H1 (cell line): ENCODE measurements at regions of chr9 and their contacts with region 1.

Region 1: DNA sequence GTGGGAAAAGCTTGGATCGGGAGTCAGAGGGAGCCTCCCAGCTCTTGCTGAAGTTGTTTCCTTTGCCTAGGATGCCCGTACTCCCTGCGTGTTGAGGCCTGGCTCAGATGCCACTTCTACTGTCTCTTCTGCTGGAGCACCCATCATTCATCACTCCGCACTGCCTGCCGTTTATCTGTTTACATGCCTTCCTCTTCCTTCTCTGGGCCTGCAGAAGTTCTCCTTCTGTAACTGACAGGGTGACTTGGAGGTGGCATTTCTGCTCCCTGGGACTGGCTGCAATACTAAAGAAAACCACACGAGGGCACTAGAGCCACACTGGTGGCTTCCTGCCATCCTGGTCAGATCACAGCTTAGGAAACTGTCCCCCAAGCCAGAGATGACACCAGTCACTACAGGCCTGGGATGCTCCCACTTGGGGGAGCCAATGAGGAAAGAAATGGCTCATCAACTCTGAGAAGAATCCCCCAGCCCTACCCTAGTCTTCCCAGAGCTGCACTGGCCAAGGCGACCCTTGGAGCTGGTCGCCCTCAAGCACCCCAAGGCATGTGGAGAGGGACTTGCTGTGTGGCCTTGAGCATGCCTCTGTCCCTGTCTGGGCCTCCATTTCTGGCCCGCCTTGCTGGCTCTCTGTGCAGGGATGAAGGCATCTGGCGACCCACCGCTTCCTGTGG is 9.7 kb upstream of the SLC25A51 start:
- DNase-seq: peak; percentile 82 to 99
- H3K4me3 ChIP-seq: no peak overlapping the region
- H3K27ac ChIP-seq: no peak overlapping the region
- H3K4me1 ChIP-seq: no peaks in the 10 kb centered on the region
- H3K27me3 ChIP-seq: no peaks in the 10 kb centered on the region
- CTCF ChIP-seq: peak; percentile 78 to 99 (median 98)
- EP300 ChIP-seq: no peak
- POLR2A ChIP-seq: no peak
- RAD21 ChIP-seq: peak; percentile 100

Region 2: GRCh38 chr9:37732086-37732741 is 181.4 kb before region 1 on chr9:
- CTCF ChIA-PET with region 1: no interaction called
- POLR2A ChIA-PET with region 1: no interaction called
- DNase-seq: no peak
- H3K4me3 ChIP-seq: no peak overlapping the region
- H3K27ac ChIP-seq: no peak overlapping the region
- H3K4me1 ChIP-seq: peaks cover 0 to 14% (median 3%) of the 10 kb centered on the region in 4 experiments; a peak in 4 of 7 replicates
- H3K27me3 ChIP-seq: no peaks in the 10 kb centered on the region
- CTCF ChIP-seq: no peak
- EP300 ChIP-seq: no peak
- POLR2A ChIP-seq: no peak
- RAD21 ChIP-seq: no peak

Region 3: GRCh38 chr9:37800631-37801286 is 112.9 kb before region 1 on chr9 and contains the start of gene DCAF10:
- CTCF ChIA-PET with region 1: no interaction called
- POLR2A ChIA-PET with region 1: no interaction called
- DNase-seq: peak; percentile 58 to 99
- H3K4me3 ChIP-seq: peak within 1 kb of the TSS; percentile 70 to 97 (median 83)
- H3K27ac ChIP-seq: peak within 1 kb of the TSS; percentile 58
- H3K4me1 ChIP-seq: peaks cover 2 to 11% (median 5%) of the 10 kb centered on the region in 4 experiments; a peak in 6 of 7 replicates
- H3K27me3 ChIP-seq: no peaks in the 10 kb centered on the region
- CTCF ChIP-seq: no peak
- EP300 ChIP-seq: peak in 1 of 2 experiments; percentile 86; a peak in 1 of 3 replicates
- POLR2A ChIP-seq: peak; percentile 65 to 82; a peak in 2 of 3 replicates
- RAD21 ChIP-seq: peak in 1 of 2 experiments; percentile 18; a peak in 1 of 4 replicates
- total RNA-seq, gene DCAF10: 11.1 and 15.0 TPM in 2 replicates

Region 4: DNA sequence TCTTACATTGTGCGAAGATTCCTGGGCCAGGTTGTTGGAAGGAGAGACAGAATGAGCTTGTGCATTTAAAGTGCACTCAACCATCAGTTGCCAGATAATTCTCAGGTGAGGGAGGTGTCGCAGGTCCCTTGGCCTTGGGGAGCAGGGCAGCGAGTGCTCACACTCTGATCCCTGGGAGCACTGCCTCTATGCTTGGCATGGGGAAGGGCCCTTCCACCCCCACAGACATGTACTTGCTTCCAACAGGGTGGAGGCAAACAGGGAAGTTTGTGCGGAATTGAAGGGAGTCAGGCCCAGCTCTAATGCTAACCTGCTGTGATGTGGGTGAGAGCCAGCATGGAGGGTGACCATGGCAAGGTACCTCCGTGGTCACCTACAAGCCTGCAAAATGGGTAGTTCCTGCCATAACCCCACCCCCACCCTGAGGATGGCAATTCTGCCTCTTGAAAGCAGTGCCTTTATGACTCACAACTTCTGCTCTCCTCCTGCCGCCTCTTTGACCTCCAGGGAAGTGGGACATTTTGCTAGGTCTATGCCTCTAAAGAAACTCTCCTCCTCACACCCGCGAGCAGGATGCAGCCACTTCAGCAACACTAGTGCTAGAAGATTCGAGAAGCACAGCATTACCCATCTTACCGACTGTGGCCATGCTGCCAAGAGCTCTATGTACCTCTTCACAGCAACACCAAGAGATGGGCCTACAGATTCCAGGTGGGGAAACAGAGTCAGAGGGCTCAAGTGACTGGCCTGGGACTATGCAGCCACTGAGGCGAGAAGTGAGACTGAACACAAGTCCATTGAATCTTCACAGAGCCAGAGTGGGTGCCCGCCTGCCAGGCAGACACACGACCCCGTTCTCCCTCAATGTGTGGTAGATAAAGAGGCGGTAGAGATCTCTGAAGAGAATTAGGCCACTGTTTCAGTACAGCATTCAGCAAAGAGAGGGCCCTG is 12.4 kb after region 1 on chr9:
- CTCF ChIA-PET with region 1: interaction called, 25 read pairs
- POLR2A ChIA-PET with region 1: interaction called, 3 read pairs
- DNase-seq: no peak
- H3K4me3 ChIP-seq: no peak overlapping the region
- H3K27ac ChIP-seq: no peak overlapping the region
- H3K4me1 ChIP-seq: peaks cover 0 to 25% (median 13%) of the 10 kb centered on the region in 4 experiments; a peak in 5 of 7 replicates
- H3K27me3 ChIP-seq: no peaks in the 10 kb centered on the region
- CTCF ChIP-seq: no peak
- EP300 ChIP-seq: no peak
- POLR2A ChIP-seq: no peak
- RAD21 ChIP-seq: no peak

Region 5: GRCh38 chr9:37943329-37944265 is 30.0 kb after region 1 on chr9:
- CTCF ChIA-PET with region 1: interaction called, 31 read pairs
- POLR2A ChIA-PET with region 1: interaction called, 4 read pairs
- DNase-seq: no peak
- H3K4me3 ChIP-seq: no peak overlapping the region
- H3K27ac ChIP-seq: no peak overlapping the region
- H3K4me1 ChIP-seq: peaks cover 6 to 27% (median 14%) of the 10 kb centered on the region in 4 experiments
- H3K27me3 ChIP-seq: no peaks in the 10 kb centered on the region
- CTCF ChIP-seq: no peak
- EP300 ChIP-seq: no peak
- POLR2A ChIP-seq: no peak
- RAD21 ChIP-seq: no peak

Region 6: GRCh38 chr9:38061326-38061977 is 147.8 kb after region 1 on chr9:
- CTCF ChIA-PET with region 1: interaction called, 20 read pairs
- POLR2A ChIA-PET with region 1: no interaction called
- DNase-seq: no peak
- H3K4me3 ChIP-seq: no peak overlapping the region
- H3K27ac ChIP-seq: no peak overlapping the region
- H3K4me1 ChIP-seq: peaks cover 15 to 31% (median 23%) of the 10 kb centered on the region in 4 experiments
- H3K27me3 ChIP-seq: peaks cover 0 to 1% (median 0%) of the 10 kb centered on the region in 4 experiments; a peak in 2 of 7 replicates
- CTCF ChIP-seq: no peak
- EP300 ChIP-seq: no peak
- POLR2A ChIP-seq: no peak
- RAD21 ChIP-seq: no peak

Region 7: DNA sequence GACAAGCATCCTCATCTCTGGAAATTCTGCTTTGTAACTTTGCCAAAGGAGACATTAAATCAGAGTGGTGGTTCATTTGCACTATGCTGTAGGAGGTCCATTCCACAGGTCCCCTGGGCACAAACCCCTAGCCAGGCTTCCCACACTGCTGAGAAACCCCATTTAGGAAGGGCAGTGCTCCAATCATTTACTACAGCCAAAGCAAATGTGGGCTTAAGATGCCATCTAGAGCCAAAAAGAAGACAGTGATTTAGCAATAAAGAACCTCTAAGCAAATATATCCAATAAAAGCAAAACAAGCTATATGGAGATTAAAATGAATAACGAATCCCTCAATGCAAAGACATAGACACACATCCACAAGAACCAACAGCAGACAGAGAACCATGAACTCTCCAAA is 349.9 kb after region 1 on chr9:
- CTCF ChIA-PET with region 1: interaction called, 28 read pairs
- POLR2A ChIA-PET with region 1: no interaction called
- DNase-seq: no peak
- H3K4me3 ChIP-seq: no peak overlapping the region
- H3K27ac ChIP-seq: no peak overlapping the region
- H3K4me1 ChIP-seq: no peaks in the 10 kb centered on the region
- H3K27me3 ChIP-seq: peaks cover 0 to 3% (median 0%) of the 10 kb centered on the region in 4 experiments; a peak in 2 of 7 replicates
- CTCF ChIP-seq: peak in 2 of 3 experiments; percentile 43 to 57; a peak in 3 of 4 replicates
- EP300 ChIP-seq: no peak
- POLR2A ChIP-seq: no peak
- RAD21 ChIP-seq: peak; percentile 86 to 87